ENCODE measurements at regions of chr11 and their contacts with region 1.

Region 1: GRCh38 chr11:49533204-49533603 is 324.8 kb upstream of the FOLH1 start:
- DNase-seq: no peak
- H3K4me3 ChIP-seq: no peak overlapping the region
- H3K27ac ChIP-seq: no peak overlapping the region
- H3K4me1 ChIP-seq: no peaks in the 10 kb centered on the region
- H3K27me3 ChIP-seq: no peaks in the 10 kb centered on the region
- CTCF ChIP-seq: no peak
- POLR2A ChIP-seq: no peak

Region 2: DNA sequence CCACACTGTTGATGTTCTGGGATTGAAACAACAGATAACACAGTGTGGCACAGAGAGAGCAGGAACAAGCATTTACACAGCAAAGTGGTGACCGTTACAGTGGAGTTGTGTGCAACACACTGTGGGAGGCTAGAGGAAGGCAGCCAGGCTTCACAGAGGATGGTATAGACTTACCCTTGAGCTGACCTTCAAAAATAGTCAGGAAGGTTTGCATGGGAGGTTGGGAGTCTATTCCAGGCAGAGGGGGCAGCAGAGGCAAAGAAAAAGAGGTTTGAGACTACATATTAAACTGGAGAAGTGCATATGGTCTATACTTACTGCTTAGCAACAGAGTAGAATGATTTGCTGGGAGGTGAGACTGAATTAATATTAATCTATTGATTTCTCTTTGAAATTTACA is 302.7 kb before region 1 on chr11:
- CTCF ChIA-PET with region 1: no interaction called
- POLR2A ChIA-PET with region 1: no interaction called
- dilution Hi-C with region 1: no loop called
- intact Hi-C with region 1: loop called (anchors 5 kb)
- DNase-seq: peak; percentile 37
- H3K4me3 ChIP-seq: no peak overlapping the region
- H3K27ac ChIP-seq: no peak overlapping the region
- H3K4me1 ChIP-seq: peaks cover 4% of the 10 kb centered on the region
- H3K27me3 ChIP-seq: no peaks in the 10 kb centered on the region
- CTCF ChIP-seq: no peak
- POLR2A ChIP-seq: no peak

Region 3: DNA sequence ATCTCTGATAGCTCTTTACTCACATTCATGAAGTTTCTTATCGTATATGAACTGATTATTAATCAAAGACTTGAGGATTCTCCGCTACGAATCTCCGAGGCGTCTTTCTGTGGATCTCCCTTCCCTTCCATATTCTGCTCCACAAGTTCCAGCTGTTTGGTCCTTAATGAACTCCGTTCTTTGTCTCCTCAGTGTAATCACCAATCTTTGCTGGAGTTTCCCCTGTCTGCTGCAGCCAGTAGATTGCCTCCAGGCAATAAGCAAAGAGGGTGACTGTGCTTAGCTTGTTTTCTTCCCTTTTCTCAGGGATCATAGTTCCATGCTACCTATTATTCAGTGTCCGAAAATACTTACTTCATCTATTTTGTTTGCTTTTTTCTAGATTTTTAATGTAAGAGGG is 155.2 kb before region 1 on chr11:
- CTCF ChIA-PET with region 1: no interaction called
- POLR2A ChIA-PET with region 1: no interaction called
- dilution Hi-C with region 1: no loop called
- intact Hi-C with region 1: loop called (anchors 10 kb)
- DNase-seq: no peak
- H3K4me3 ChIP-seq: no peak overlapping the region
- H3K27ac ChIP-seq: no peak overlapping the region
- H3K4me1 ChIP-seq: no peaks in the 10 kb centered on the region
- H3K27me3 ChIP-seq: no peaks in the 10 kb centered on the region
- CTCF ChIP-seq: no peak
- POLR2A ChIP-seq: no peak

Region 4: GRCh38 chr11:49505231-49505630 is 28.0 kb before region 1 on chr11:
- CTCF ChIA-PET with region 1: no interaction called
- POLR2A ChIA-PET with region 1: no interaction called
- dilution Hi-C with region 1: no loop called
- intact Hi-C with region 1: no loop called
- DNase-seq: no peak
- H3K4me3 ChIP-seq: no peak overlapping the region
- H3K27ac ChIP-seq: no peak overlapping the region
- H3K4me1 ChIP-seq: no peaks in the 10 kb centered on the region
- H3K27me3 ChIP-seq: no peaks in the 10 kb centered on the region
- CTCF ChIP-seq: no peak
- POLR2A ChIP-seq: no peak

Region 5: GRCh38 chr11:50164050-50164449 is 630.8 kb after region 1 on chr11:
- CTCF ChIA-PET with region 1: no interaction called
- POLR2A ChIA-PET with region 1: no interaction called
- dilution Hi-C with region 1: no loop called
- intact Hi-C with region 1: no loop called
- DNase-seq: no peak
- H3K4me3 ChIP-seq: no peak overlapping the region
- H3K27ac ChIP-seq: no peak overlapping the region
- H3K4me1 ChIP-seq: no peaks in the 10 kb centered on the region
- H3K27me3 ChIP-seq: no peaks in the 10 kb centered on the region
- CTCF ChIP-seq: no peak
- POLR2A ChIP-seq: no peak